ENCODE measurements at regions of chr1 and their contacts with region 1.

Region 1: DNA sequence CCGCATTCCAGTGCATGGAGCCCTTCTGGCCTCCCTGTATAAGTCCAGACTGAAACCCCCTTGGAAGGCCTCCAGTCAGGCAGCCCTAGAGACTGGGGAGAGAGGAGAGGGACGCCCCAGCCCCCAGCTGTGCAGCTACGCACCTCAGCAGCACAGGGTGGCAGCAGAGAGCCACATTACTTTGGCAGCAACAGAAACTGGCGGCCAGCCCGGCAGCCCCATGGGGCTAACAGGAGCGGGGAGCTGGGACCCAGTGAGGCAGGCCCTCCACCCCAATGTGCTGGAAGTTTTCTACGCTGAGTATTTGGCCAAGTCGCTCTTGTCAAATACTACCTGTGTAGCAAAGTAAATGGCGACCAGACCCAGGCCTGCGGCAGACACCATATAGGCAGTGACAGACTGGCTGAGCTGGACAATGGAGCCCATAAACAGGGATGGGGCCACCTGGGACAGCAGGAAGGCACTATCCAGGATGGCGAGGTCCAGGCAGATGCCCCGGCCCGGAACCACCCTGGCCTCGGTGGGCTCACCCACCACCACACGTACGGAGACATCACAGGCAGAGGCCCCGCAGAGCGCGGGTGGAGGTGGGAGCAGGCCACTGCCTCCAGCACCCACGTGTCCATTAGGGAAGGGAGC is 21.2 kb downstream of the SLC45A3 start:
- ATAC-seq: peak; percentile 71 to 93 (median 89)
- H3K4me3 ChIP-seq: no peak overlapping the region
- H3K27ac ChIP-seq: no peak overlapping the region
- H3K4me1 ChIP-seq: peaks cover 3 to 5% of the 10 kb centered on the region in 2 donors

Region 2: DNA sequence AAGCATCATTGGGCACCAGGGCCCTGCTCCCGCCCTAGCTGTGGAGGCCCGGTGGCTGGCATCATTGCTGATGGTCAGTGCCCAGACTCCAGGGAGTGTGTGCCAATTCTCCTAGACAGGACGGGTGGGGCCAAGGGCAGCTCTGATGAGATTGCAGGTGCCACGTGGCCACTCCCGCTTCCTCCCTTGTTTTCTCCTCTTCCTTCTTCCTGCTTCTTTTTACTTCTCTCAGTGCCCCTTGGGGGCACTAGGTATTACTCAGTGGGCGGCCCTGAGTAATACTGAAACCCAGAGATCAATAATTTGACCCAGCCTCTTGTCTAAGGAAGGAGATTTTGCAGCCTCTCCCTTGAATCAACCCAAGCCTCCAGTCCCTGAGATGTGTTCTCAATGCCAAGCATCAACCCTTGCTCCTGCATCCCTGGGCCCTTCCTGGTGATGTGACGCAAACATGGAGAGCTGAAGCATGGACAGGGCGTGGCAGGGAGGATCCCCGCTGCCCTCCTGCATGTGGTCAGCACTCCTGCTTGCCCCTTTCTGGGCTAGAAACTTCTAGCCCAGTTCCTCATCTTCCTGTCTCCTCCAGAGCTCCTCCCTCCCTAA is 122.2 kb before region 1 on chr1:
- in situ Hi-C with region 1: loop called in 1 of 9 experiments (anchors 10 kb)
- ATAC-seq: peak in 1 of 8 experiments; percentile 15
- H3K4me3 ChIP-seq: no peak overlapping the region
- H3K27ac ChIP-seq: no peak overlapping the region
- H3K4me1 ChIP-seq: peaks cover 5 to 18% of the 10 kb centered on the region in 2 donors

Region 3: GRCh38 chr1:205591522-205592351 is 67.3 kb before region 1 on chr1:
- in situ Hi-C with region 1: loop called in 5 of 9 experiments (anchors 10 kb)
- ATAC-seq: peak; percentile 94 to 98 (median 96)
- H3K4me3 ChIP-seq: peak overlapping the region; percentile 22 to 38 (median 26)
- H3K27ac ChIP-seq: no peak overlapping the region
- H3K4me1 ChIP-seq: peaks cover 9 to 12% of the 10 kb centered on the region in 2 donors

Region 4: DNA sequence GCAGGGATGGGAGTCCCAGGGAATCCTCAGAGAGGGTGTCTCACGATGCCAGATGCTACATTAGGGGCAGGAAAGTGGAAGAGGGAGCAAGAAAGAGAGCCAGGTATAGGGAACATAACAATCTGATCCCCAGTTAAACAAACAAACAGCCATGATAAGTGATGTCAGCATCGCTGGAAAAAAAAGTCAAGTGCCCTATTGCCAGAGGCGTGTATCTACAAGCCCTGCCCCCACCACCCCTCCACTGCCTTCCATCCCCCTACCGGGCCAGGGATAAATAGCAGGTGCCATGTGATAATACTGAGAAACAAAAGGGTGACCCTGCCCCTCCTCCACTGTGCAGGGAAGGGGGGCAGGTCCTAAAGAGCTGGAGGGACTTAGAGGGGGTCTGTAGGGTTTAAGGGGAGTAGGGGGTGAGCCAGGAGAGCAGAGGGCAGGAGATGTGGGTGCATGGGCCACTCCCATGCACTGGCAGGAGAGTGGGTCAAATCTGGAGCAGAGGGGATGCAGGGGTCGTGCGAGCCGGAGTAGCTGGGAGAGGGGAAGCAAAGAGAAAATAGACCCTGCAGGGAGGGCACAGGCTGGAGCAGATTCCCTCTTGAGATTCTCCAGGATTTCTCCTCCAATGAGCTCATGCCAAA is 280.7 kb after region 1 on chr1:
- in situ Hi-C with region 1: no loop called
- ATAC-seq: peak in 6 of 8 experiments; percentile 65 to 91 (median 88)
- H3K4me3 ChIP-seq: no peak overlapping the region
- H3K27ac ChIP-seq: no peak overlapping the region
- H3K4me1 ChIP-seq: peaks cover 7% of the 10 kb centered on the region in 2 donors

Region 5: GRCh38 chr1:205961405-205961804 is 302.3 kb after region 1 on chr1:
- in situ Hi-C with region 1: loop called in 1 of 9 experiments (anchors 25 kb)
- ATAC-seq: peak in 7 of 8 experiments; percentile 16 to 75 (median 55)
- H3K4me3 ChIP-seq: no peak overlapping the region
- H3K27ac ChIP-seq: peak overlapping the region in 1 of 2 donors; percentile 41
- H3K4me1 ChIP-seq: peaks cover 13 to 21% of the 10 kb centered on the region in 2 donors

Region 6: GRCh38 chr1:205977402-205978014 is 318.4 kb after region 1 on chr1:
- in situ Hi-C with region 1: loop called in 2 of 9 experiments (anchors 25 kb)
- ATAC-seq: peak; percentile 54 to 89 (median 66)
- H3K4me3 ChIP-seq: no peak overlapping the region
- H3K27ac ChIP-seq: no peak overlapping the region
- H3K4me1 ChIP-seq: peaks cover 19 to 20% of the 10 kb centered on the region in 2 donors